ENCODE measurements at regions of chr6 and their contacts with region 1.

Region 1: DNA sequence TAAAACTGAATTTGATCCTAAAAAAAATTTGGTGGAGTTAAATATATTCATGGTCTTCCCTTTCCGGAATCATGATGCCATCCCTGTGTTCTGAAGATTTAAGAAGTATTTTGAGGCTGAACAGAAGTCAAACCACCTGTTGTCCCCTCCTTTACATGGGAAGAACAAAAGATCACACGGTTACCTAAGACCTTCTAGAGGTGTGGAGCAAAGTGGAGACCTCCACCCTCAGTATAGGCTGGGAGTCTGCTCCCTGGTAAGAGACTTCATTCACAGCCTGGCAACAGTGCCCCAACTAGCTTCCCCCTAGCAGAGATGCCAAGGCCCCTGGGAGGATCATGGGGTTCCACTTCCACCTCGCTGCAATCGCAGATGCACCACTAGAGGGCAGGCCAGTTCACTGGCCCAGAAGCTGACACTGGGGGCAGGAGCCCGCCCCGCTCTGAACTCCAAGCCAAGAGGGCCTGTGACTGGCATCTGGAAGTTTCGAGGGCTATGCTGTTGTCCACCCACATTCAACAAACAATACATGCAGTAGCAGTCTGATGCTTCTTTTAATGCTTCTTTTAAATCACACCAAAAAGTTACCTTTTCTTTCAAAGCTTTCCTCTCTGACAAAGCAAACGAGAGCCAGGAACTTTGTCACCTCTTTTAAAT is 19.5 kb upstream of the UBE2J1 start:
- DNase-seq: peak; percentile 46 to 78
- ATAC-seq: peak; percentile 67 to 75
- H3K4me3 ChIP-seq: no peak overlapping the region
- H3K27ac ChIP-seq: peak overlapping the region; percentile 60 to 79 (median 72)
- H3K4me1 ChIP-seq: peaks cover 30 to 37% of the 10 kb centered on the region in 2 donors
- H3K27me3 ChIP-seq: no peaks in the 10 kb centered on the region
- CTCF ChIP-seq: peak; percentile 77 to 98 (median 92)
- POLR2A ChIP-seq: no peak

Region 2: GRCh38 chr6:89311853-89312531 is 60.0 kb before region 1 on chr6:
- in situ Hi-C with region 1: no loop called
- intact Hi-C with region 1: loop called (anchors 5 kb)
- DNase-seq: peak in 1 of 2 donors; percentile 22
- ATAC-seq: peak; percentile 45 to 50
- H3K4me3 ChIP-seq: no peak overlapping the region
- H3K27ac ChIP-seq: peak overlapping the region; percentile 27 to 81 (median 60)
- H3K4me1 ChIP-seq: peaks cover 25 to 44% of the 10 kb centered on the region in 2 donors
- H3K27me3 ChIP-seq: no peaks in the 10 kb centered on the region
- CTCF ChIP-seq: peak; percentile 24 to 63 (median 43)
- POLR2A ChIP-seq: no peak

Region 3: GRCh38 chr6:89412071-89413005 is 40.4 kb after region 1 on chr6 and contains the start of gene RRAGD:
- in situ Hi-C with region 1: no loop called
- intact Hi-C with region 1: loop called (anchors 1 kb)
- DNase-seq: peak; percentile 82 to 91
- ATAC-seq: peak; percentile 85 to 91
- H3K4me3 ChIP-seq: peak within 1 kb of the TSS; percentile 89 to 97 (median 93)
- H3K27ac ChIP-seq: peak within 1 kb of the TSS; percentile 98 to 99 (median 99)
- H3K4me1 ChIP-seq: peaks cover 36 to 37% of the 10 kb centered on the region in 2 donors
- H3K27me3 ChIP-seq: no peaks in the 10 kb centered on the region
- CTCF ChIP-seq: peak in 3 of 5 experiments; percentile 20 to 47 (median 22)
- POLR2A ChIP-seq: peak; percentile 93 to 95
- total RNA-seq, gene RRAGD: 53.6 to 173 (median 106) TPM

Region 4: GRCh38 chr6:89432875-89433251 is 60.9 kb after region 1 on chr6 and contains the start of gene ANKRD6:
- in situ Hi-C with region 1: no loop called
- intact Hi-C with region 1: loop called (anchors 5 kb)
- DNase-seq: peak; percentile 30 to 64
- ATAC-seq: peak; percentile 84 to 90
- H3K4me3 ChIP-seq: peak within 1 kb of the TSS; percentile 61 to 90 (median 74)
- H3K27ac ChIP-seq: peak within 1 kb of the TSS in 2 of 4 donors; percentile 34 to 56
- H3K4me1 ChIP-seq: no peaks in the 10 kb centered on the region
- H3K27me3 ChIP-seq: no peaks in the 10 kb centered on the region
- CTCF ChIP-seq: peak; percentile 79 to 97 (median 97)
- POLR2A ChIP-seq: no peak
- total RNA-seq, gene ANKRD6: 1.6 to 6.8 (median 2.9) TPM

Region 5: GRCh38 chr6:89610149-89610642 is 238.2 kb after region 1 on chr6:
- in situ Hi-C with region 1: loop called in 1 of 4 experiments (anchors 10 kb)
- intact Hi-C with region 1: loop called (anchors 1 kb)
- DNase-seq: peak; percentile 23 to 45
- ATAC-seq: peak; percentile 65 to 70
- H3K4me3 ChIP-seq: no peak overlapping the region
- H3K27ac ChIP-seq: no peak overlapping the region
- H3K4me1 ChIP-seq: no peaks in the 10 kb centered on the region
- H3K27me3 ChIP-seq: no peaks in the 10 kb centered on the region
- CTCF ChIP-seq: peak; percentile 67 to 89 (median 81)
- POLR2A ChIP-seq: no peak

Measured in gastrocnemius medialis (tissue), 4 donors.